PC-9 (cell line): ENCODE measurements at regions of chr17 and their contacts with region 1.

Region 1: GRCh38 chr17:8073627-8074484 is 13.7 kb downstream of the ALOX12B start:
- DNase-seq: peak in 1 of 2 experiments; percentile 77
- H3K4me3 ChIP-seq: no peak overlapping the region
- H3K27ac ChIP-seq: no peak overlapping the region
- H3K4me1 ChIP-seq: no peaks in the 10 kb centered on the region
- H3K27me3 ChIP-seq: peaks cover 16% of the 10 kb centered on the region
- CTCF ChIP-seq: peak; percentile 76

Region 2: GRCh38 chr17:7867881-7868329 is 206.0 kb before region 1 on chr17:
- CTCF ChIA-PET with region 1: no interaction called
- POLR2A ChIA-PET with region 1: interaction called, 10 read pairs
- intact Hi-C with region 1: no loop called
- DNase-seq: no peak
- H3K4me3 ChIP-seq: no peak overlapping the region
- H3K27ac ChIP-seq: no peak overlapping the region
- H3K4me1 ChIP-seq: no peaks in the 10 kb centered on the region
- H3K27me3 ChIP-seq: no peaks in the 10 kb centered on the region
- CTCF ChIP-seq: no peak

Region 3: GRCh38 chr17:8087075-8087944 is 13.5 kb after region 1 on chr17 and contains the start of gene ALOX12B:
- CTCF ChIA-PET with region 1: interaction called, 10 read pairs
- POLR2A ChIA-PET with region 1: no interaction called
- intact Hi-C with region 1: no loop called
- DNase-seq: peak in 1 of 2 experiments; percentile 61
- H3K4me3 ChIP-seq: no peak within 1 kb of the TSS
- H3K27ac ChIP-seq: no peak within 1 kb of the TSS
- H3K4me1 ChIP-seq: no peaks in the 10 kb centered on the region
- H3K27me3 ChIP-seq: no peaks in the 10 kb centered on the region; the same call in 1 of the 2 replicates
- CTCF ChIP-seq: no peak
- total RNA-seq, gene ALOX12B: not detected in 2 replicates